Caco-2 (cell line): ENCODE measurements at regions of chr3 and their contacts with region 1.

Region 1: GRCh38 chr3:122365073-122365472 is 18.0 kb downstream of the MIX23 start:
- DNase-seq: no peak
- H3K4me3 ChIP-seq: no peak overlapping the region
- H3K4me3 Mint-ChIP-seq: peak overlapping the region; percentile 48
- H3K27ac Mint-ChIP-seq: peak overlapping the region; percentile 76
- H3K4me1 ChIP-seq: peaks cover 49% of the 10 kb centered on the region
- H3K4me1 Mint-ChIP-seq: peaks cover 28% of the 10 kb centered on the region
- H3K27me3 ChIP-seq: no peaks in the 10 kb centered on the region
- H3K27me3 Mint-ChIP-seq: no peaks in the 10 kb centered on the region
- CTCF ChIP-seq: no peak

Region 2: DNA sequence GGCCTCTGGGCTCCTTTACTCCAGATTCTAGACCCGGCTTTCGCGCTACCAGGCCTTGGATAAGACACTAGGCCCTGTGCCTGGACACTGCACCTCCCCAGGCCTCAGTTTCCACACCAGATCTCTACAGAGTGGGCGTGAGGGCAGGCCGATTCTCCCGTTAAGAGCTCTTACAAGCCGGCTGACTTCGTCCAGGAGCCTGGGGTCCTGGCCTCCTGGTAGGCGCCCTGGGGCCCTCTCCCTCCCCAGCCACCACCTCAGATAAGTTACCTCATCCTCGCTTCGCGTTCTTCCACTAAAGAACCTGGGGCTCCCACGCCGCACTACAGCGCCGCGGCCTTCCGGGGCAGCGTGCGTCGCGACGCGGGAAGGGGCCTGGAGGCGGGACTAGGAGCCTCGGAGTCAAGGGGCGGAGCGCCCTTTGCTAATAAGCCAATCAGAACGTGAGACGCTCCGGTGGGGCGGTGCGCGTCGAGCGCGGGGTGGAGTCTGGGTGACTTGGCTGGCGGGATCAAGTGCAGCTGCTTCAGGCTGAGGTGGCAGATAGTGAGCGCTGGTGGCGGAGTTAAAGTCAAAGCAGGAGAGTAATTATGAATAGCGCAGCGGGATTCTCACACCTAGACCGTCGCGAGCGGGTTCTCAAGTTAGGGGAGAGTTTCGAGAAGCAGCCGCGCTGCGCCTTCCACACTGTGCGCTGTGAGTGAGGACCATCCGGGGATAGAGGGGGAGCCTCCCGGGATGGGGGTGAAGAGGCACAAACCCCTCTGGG is 530.2 kb before region 1 on chr3 and contains the starts of genes EAF2 and IQCB1:
- CTCF ChIA-PET with region 1: no interaction called
- POLR2A ChIA-PET with region 1: no interaction called
- intact Hi-C with region 1: loop called (anchors 10 kb)
- DNase-seq: peak; percentile 95 to 96
- H3K4me3 ChIP-seq: peak within 1 kb of the TSS; percentile 66
- H3K4me3 Mint-ChIP-seq: peak within 1 kb of the TSS; percentile 93
- H3K27ac Mint-ChIP-seq: peak within 1 kb of the TSS; percentile 68
- H3K4me1 ChIP-seq: peaks cover 7% of the 10 kb centered on the region
- H3K4me1 Mint-ChIP-seq: peaks cover 12% of the 10 kb centered on the region
- H3K27me3 ChIP-seq: no peaks in the 10 kb centered on the region
- H3K27me3 Mint-ChIP-seq: peaks cover 3% of the 10 kb centered on the region
- CTCF ChIP-seq: no peak
- total RNA-seq, gene EAF2: 4.5 and 4.6 TPM in 2 replicates
- total RNA-seq, gene IQCB1: 36.1 and 36.4 TPM in 2 replicates

Region 3: GRCh38 chr3:122322095-122323075 is 42.7 kb before region 1 on chr3:
- CTCF ChIA-PET with region 1: no interaction called
- POLR2A ChIA-PET with region 1: no interaction called
- intact Hi-C with region 1: no loop called
- DNase-seq: no peak
- H3K4me3 ChIP-seq: no peak overlapping the region
- H3K4me3 Mint-ChIP-seq: no peak overlapping the region
- H3K27ac Mint-ChIP-seq: no peak overlapping the region
- H3K4me1 ChIP-seq: no peaks in the 10 kb centered on the region
- H3K4me1 Mint-ChIP-seq: no peaks in the 10 kb centered on the region
- H3K27me3 ChIP-seq: no peaks in the 10 kb centered on the region
- H3K27me3 Mint-ChIP-seq: no peaks in the 10 kb centered on the region
- CTCF ChIP-seq: no peak

Region 4: DNA sequence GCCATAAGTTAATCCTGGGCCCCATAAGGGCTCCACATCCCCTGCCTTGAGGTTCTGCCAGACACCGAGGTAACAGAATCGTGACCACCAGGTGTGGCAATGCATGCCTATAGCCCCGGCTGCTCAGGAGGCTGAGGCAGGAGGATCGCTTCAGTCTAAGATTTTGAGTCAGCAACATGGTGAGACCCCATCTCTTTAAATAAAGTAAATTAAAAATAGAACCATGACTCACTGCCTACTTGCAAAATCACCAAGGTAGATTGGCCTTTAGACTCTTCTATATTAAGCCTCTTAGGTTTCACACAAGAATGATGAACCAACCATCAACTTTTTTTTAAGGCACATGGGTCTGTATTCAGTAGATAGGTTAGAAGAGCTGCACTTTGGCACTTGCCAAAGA is 41.1 kb after region 1 on chr3:
- CTCF ChIA-PET with region 1: no interaction called
- POLR2A ChIA-PET with region 1: no interaction called
- intact Hi-C with region 1: no loop called
- DNase-seq: no peak
- H3K4me3 ChIP-seq: no peak overlapping the region
- H3K4me3 Mint-ChIP-seq: no peak overlapping the region
- H3K27ac Mint-ChIP-seq: no peak overlapping the region
- H3K4me1 ChIP-seq: no peaks in the 10 kb centered on the region
- H3K4me1 Mint-ChIP-seq: no peaks in the 10 kb centered on the region
- H3K27me3 ChIP-seq: no peaks in the 10 kb centered on the region
- H3K27me3 Mint-ChIP-seq: no peaks in the 10 kb centered on the region
- CTCF ChIP-seq: no peak

Region 5: DNA sequence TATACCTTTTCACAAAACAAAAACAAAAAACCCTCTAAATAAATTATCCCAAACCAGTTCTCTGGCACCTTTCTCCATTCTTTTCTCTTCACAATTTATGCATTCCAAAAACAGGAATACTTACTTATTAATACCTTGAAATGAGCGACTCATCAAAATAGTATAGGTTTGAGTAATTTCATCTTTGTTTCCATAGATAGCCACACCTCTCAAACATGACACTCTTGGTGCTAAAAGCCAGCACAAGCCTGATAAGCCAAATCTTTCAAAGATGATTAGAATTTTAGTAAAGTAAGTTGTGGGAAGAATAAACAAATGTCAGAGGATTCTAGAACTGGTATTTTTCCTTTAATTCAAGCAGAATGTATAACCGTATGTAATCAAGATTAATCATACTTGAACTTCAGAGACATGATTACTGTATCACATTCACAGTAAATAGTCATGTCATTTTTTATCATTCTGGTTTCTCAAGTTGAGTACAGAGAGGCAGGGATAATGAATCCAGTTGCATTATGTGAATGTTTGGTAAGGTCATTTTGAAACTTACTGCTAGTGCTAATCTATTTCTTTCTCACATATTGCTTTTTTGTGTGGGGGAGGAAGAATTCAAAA is 62.9 kb after region 1 on chr3:
- CTCF ChIA-PET with region 1: no interaction called
- POLR2A ChIA-PET with region 1: no interaction called
- intact Hi-C with region 1: loop called (anchors 10 kb)
- DNase-seq: no peak
- H3K4me3 ChIP-seq: no peak overlapping the region
- H3K4me3 Mint-ChIP-seq: no peak overlapping the region
- H3K27ac Mint-ChIP-seq: no peak overlapping the region
- H3K4me1 ChIP-seq: no peaks in the 10 kb centered on the region
- H3K4me1 Mint-ChIP-seq: no peaks in the 10 kb centered on the region
- H3K27me3 ChIP-seq: no peaks in the 10 kb centered on the region
- H3K27me3 Mint-ChIP-seq: no peaks in the 10 kb centered on the region
- CTCF ChIP-seq: no peak